ENCODE measurements at regions of chr10 and their contacts with region 1.

Region 1: DNA sequence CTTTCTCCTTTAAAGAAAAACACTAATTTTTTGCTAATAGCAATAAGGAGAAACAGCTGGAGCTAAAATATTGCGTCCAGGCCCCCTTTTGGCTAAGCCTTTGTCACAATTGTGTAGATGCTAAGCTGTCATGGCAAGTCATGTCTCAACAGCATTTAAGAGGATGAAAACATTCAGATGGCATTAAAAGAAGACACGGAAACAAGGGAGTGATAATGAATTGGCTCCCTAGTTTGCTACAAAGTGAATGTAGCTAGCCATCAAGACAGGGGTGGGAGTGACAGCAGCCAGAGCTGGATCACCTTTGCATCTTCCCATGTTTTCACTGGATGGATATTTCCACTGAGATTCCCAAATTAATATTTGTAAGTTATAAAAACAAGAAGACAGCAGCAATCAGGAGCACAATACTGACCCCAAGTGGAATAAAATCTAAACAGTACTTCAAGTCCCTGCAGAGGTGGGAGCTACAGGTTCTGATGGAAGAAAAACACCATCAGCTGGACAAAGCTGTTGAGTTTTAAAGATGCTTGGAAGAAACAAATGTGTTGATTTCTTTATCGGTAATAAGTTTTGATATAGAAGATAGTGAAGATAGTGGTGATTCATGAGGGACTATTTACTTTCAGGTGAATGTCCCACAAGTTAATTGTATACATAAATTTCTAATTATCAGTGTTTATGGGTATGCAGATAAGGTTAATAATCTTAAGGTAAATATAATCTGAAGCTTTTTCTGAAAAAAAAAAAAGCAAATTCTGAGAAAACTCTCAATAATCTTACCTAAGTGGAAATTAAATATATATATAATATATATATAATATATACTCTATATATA is 129.4 kb downstream of the SLC16A9 start:
- DNase-seq: no peak
- H3K4me3 ChIP-seq: no peak overlapping the region
- H3K27ac ChIP-seq: no peak overlapping the region
- H3K4me1 ChIP-seq: peaks cover 0 to 10% (median 2%) of the 10 kb centered on the region in 4 donors
- H3K27me3 ChIP-seq: no peaks in the 10 kb centered on the region
- CTCF ChIP-seq: peak in 4 of 5 experiments; percentile 18 to 45 (median 34)
- EP300 ChIP-seq: no peak
- POLR2A ChIP-seq: no peak

Region 2: GRCh38 chr10:59234816-59235429 is 345.3 kb before region 1 on chr10:
- in situ Hi-C with region 1: loop called in 1 of 4 experiments (anchors 25 kb)
- intact Hi-C with region 1: loop called (anchors 10 kb)
- DNase-seq: peak; percentile 11
- H3K4me3 ChIP-seq: no peak overlapping the region
- H3K27ac ChIP-seq: no peak overlapping the region
- H3K4me1 ChIP-seq: no peaks in the 10 kb centered on the region
- H3K27me3 ChIP-seq: no peaks in the 10 kb centered on the region
- CTCF ChIP-seq: peak; percentile 45 to 62 (median 49)
- EP300 ChIP-seq: no peak
- POLR2A ChIP-seq: no peak

Measured in transverse colon (tissue), 4 donors.